ENCODE measurements at regions of chr2 and their contacts with region 1.

Region 1: GRCh38 chr2:20106746-20107145 is 55.3 kb upstream of the LAPTM4A start:
- DNase-seq: peak; percentile 45 to 83 (median 50)
- ATAC-seq: peak; percentile 45 to 73 (median 69)
- H3K4me3 ChIP-seq: peak overlapping the region in 9 of 12 donors; percentile 21 to 47 (median 29)
- H3K27ac ChIP-seq: no peak overlapping the region
- H3K4me1 ChIP-seq: peaks cover 0 to 7% (median 0%) of the 10 kb centered on the region in 12 donors
- H3K27me3 ChIP-seq: peaks cover 0 to 15% (median 4%) of the 10 kb centered on the region in 9 donors
- CTCF ChIP-seq: peak; percentile 30 to 68 (median 50)
- POLR2A ChIP-seq: no peak

Region 2: DNA sequence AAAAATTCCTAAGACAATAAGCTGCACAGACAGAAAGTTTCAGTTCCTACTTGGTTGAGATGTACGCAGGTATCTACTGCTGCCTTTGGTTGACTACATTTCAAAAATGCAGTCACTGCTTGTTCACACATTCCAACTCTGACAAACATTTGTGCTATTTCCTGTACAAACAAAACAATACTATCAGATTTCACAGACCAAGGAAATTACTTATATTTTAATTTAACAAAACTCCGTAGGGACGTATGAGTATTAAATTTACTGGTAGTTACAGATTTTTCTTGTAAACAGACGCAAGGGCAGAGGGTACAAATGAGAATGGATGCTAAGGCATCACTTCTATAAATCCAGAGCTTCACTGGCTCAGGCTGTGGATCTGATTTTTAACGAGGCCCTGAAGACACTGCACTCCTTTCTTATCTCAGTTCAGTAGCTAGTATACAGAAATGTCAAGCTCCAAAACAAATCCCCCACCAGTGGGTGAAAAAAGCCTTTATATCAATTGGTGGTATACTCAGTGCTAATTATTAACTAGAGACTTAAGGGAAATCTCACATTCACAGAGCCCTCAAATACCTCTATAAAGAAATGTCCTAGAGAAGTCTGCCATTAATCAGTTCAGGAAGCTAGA is 173.3 kb before region 1 on chr2:
- intact Hi-C with region 1: no loop called
- DNase-seq: no peak
- ATAC-seq: no peak
- H3K4me3 ChIP-seq: no peak overlapping the region
- H3K27ac ChIP-seq: no peak overlapping the region
- H3K4me1 ChIP-seq: no peaks in the 10 kb centered on the region
- H3K27me3 ChIP-seq: no peaks in the 10 kb centered on the region
- CTCF ChIP-seq: no peak
- POLR2A ChIP-seq: no peak

Region 3: DNA sequence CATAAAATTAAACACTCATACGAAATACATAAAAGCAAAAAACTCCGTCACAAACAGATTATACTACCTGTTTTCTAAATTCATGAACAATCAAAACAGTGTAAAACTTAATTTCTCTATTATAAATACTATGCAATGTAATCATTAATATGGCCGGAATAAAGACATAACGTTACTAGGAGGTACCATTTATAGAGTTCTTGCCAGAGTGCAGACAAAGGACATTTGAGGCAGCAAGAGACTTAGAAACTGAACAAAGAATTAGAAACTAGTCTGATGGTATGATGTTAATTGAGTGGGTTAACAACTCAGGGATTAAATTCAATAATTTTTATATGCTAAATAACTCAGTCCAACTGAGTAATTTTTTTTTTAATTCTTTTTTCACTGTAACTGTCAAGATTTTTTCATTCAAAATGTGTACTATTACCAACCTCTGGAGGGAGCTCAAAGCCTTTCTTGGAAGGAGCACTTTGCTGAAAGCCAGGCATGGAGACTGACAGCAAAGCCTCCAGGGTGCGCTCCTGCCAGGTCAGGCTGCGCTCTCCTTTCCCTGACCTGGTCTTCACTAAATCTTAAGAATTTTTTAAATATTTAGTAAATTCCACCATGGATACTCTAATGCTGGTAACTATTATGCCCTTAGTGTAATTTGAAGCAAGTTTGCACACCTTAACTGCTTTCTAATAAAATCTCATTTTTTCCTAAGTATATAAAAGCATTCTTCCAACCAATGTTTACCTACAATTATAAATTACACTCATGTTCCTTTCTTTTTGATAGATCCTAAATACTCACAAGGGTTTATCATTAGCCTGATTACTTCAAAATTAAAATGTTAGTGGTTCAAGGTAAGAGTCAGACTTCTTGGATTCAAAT is 151.0 kb before region 1 on chr2:
- intact Hi-C with region 1: loop called in 2 of 10 experiments (anchors 2 kb)
- DNase-seq: peak; percentile 48 to 57 (median 53)
- ATAC-seq: peak in 3 of 4 donors; percentile 83 to 87 (median 86)
- H3K4me3 ChIP-seq: no peak overlapping the region
- H3K27ac ChIP-seq: no peak overlapping the region
- H3K4me1 ChIP-seq: peaks cover 0 to 3% (median 0%) of the 10 kb centered on the region in 12 donors
- H3K27me3 ChIP-seq: no peaks in the 10 kb centered on the region
- CTCF ChIP-seq: peak; percentile 62 to 85 (median 76)
- POLR2A ChIP-seq: no peak

Region 4: DNA sequence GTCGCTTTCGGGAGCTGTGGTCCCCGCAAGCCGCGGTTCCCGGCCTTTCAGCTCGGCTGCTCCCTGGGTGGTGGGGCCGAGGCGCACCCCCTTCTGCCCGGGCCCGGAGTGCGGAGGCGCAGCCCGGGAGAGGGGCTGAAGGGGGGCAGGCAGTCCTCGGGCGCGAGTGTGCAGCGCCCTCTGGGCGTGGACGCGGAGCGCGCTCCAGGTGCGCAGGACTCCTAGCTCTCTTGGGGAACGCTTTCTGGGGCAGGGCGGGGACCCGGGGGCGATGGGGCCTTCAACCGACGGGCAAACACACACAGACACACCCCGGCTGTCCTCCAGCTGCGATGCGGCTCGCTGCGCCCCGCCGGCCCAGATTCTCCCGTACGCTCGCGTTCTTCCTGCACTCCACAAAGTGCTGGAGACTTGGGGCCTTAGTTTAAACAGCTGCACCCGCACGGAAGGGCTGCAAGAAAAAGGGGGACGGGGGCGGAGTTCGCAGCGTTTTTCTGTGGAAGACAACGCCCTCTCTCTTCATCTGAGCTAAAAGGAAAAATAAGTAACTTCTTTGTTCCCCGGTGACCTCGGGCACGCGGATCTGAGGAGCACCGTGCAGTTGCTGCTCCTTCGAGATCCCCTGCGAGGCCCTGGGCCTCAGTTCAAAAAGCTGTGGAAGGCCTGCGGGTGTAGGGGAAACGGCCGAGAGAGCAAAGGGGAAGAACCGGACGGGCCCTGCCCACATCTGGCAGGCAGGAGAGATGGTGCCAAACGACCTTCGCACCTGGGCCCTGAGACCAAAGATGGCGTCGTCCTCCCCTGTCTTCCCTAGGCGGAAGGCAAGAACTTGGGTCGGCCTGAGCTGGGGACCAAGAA is 118.8 kb after region 1 on chr2:
- intact Hi-C with region 1: loop called in 5 of 10 experiments (anchors 2 to 10 kb)
- DNase-seq: peak in 4 of 5 donors; percentile 31 to 63 (median 41)
- ATAC-seq: peak in 3 of 4 donors; percentile 78 to 87 (median 83)
- H3K4me3 ChIP-seq: peak overlapping the region; percentile 48 to 68 (median 56)
- H3K27ac ChIP-seq: no peak overlapping the region
- H3K4me1 ChIP-seq: peaks cover 0 to 29% (median 9%) of the 10 kb centered on the region in 12 donors
- H3K27me3 ChIP-seq: peaks cover 0 to 65% (median 12%) of the 10 kb centered on the region in 9 donors
- CTCF ChIP-seq: peak; percentile 17 to 63 (median 40)
- POLR2A ChIP-seq: no peak

Region 5: DNA sequence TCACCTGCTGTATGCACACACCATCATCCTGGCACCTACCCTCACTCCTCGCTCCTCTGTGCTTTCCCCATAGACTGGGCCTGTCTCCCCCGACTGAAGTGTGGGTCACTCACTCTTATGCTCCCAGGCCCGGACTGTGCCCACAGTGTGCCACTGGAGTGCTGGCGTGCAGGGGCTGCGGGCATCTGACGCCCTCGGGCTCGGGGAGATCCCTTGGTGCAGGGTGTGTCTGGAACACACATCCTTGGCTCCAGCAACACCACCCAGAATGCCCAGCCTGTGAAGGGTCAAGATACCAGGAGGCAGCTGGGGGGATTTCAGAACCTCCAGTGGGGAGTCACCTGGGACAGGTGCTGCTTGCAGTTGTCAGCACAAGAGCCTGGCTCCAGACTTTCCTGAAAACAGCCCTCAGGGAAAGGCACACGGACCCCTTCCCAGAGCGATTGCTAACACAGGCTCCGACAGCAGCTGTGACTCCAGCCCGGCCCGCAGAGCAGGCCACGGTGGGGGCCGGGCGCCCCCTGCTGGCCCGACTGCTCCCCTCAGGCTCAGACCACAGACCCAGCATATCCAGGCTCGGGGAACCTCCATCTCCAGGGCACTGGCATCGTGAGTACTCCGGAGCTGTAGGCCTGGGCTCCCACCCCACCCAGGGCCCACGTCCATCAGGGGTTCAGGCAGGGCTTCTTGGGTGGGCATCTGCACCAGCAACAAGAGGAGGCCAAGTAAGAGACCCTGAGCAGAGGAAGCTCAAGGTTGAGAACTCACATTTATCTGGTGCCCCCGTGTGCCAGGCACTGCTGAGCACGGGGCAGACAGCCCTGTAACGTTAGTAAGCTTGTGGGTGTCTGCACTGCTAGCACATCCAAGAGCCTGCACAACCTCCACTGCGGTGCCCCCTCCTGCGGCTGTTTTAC is 535.6 kb after region 1 on chr2:
- intact Hi-C with region 1: loop called in 1 of 10 experiments (anchors 10 kb)
- DNase-seq: peak; percentile 76 to 89 (median 79)
- ATAC-seq: peak; percentile 82 to 91 (median 88)
- H3K4me3 ChIP-seq: no peak overlapping the region
- H3K27ac ChIP-seq: peak overlapping the region in 6 of 12 donors; percentile 1 to 90 (median 52)
- H3K4me1 ChIP-seq: peaks cover 5 to 45% (median 23%) of the 10 kb centered on the region in 12 donors
- H3K27me3 ChIP-seq: no peaks in the 10 kb centered on the region
- CTCF ChIP-seq: peak; percentile 88 to 98 (median 96)
- POLR2A ChIP-seq: peak in 1 of 2 donors; percentile 15